GM12878 (cell line): ENCODE measurements at regions of chr7 and their contacts with region 1.

Region 1: DNA sequence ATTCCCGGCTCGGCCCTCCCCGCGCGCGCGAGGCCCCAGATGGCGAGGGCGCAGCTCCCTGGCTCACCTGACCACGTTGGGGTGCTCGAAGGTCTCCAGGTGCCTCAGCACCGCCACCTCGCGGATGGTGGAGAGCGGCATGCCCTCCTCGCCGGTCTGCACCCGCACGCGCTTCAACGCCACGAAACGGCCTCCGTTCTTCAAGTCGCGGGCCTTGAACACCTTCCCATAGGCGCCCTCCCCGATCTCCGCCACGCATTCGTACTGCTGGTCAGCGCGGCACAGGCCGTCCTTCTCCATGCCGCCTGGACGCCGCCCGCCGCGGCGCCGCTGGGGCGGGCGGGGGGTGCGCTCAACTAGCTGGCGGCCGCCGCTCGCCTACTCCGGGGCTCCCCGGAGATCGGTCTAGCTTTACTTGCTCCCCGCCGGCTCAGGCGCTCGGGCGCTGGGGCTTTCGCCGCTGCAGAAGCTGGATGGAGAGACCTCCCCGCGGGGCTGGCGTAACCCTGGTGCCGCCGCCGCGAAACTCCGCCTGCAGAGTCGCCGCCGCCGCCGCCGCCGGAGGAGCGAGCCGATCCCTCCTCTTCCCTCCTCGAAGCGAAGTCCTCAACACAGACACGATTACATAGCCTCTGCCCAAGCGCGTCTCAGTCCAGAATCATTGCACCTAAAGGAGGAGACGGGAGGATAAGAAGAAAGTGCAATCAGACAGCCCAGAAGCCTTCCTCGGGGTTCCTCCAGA is 3.2 kb downstream of the CDK6 start:
- DNase-seq: no peak
- ATAC-seq: peak; percentile 72
- H3K4me3 ChIP-seq: peak overlapping the region; percentile 85
- H3K27ac ChIP-seq: peak overlapping the region; percentile 91
- H3K4me1 ChIP-seq: peaks cover 5% of the 10 kb centered on the region
- H3K27me3 ChIP-seq: no peaks in the 10 kb centered on the region
- CTCF ChIP-seq: peak; percentile 87 to 98 (median 94)
- EP300 ChIP-seq: peak in 1 of 2 experiments; percentile 21; a peak in 1 of 4 replicates
- POLR2A ChIP-seq: peak; percentile 77
- RAD21 ChIP-seq: peak; percentile 88

Region 2: GRCh38 chr7:92641921-92642511 is 191.2 kb before region 1 on chr7:
- CTCF ChIA-PET with region 1: interaction called, 5 read pairs
- POLR2A ChIA-PET with region 1: interaction called, 4 read pairs
- RAD21 ChIA-PET with region 1: interaction called, 5 read pairs
- SMC1A ChIA-PET with region 1: interaction called, 18 read pairs
- in situ Hi-C with region 1: no loop called
- intact Hi-C with region 1: no loop called
- DNase-seq: no peak
- ATAC-seq: peak; percentile 83
- H3K4me3 ChIP-seq: peak overlapping the region; percentile 39
- H3K27ac ChIP-seq: peak overlapping the region; percentile 73
- H3K4me1 ChIP-seq: peaks cover 25% of the 10 kb centered on the region
- H3K27me3 ChIP-seq: no peaks in the 10 kb centered on the region
- CTCF ChIP-seq: no peak
- EP300 ChIP-seq: peak; percentile 60 to 73; a peak in 3 of 4 replicates
- POLR2A ChIP-seq: no peak
- RAD21 ChIP-seq: 0 out of 2 replicates have a peak, but pooled peaks have one; percentile 4

Region 3: GRCh38 chr7:92708111-92709042 is 124.8 kb before region 1 on chr7:
- CTCF ChIA-PET with region 1: interaction called, 4 read pairs
- POLR2A ChIA-PET with region 1: interaction called, 6 read pairs
- RAD21 ChIA-PET with region 1: interaction called, 4 read pairs
- SMC1A ChIA-PET with region 1: interaction called, 3 read pairs
- in situ Hi-C with region 1: no loop called
- intact Hi-C with region 1: loop called (anchors 5 kb)
- DNase-seq: no peak
- ATAC-seq: peak; percentile 87
- H3K4me3 ChIP-seq: no peak overlapping the region
- H3K27ac ChIP-seq: no peak overlapping the region
- H3K4me1 ChIP-seq: peaks cover 5% of the 10 kb centered on the region; the same call in 1 of the 2 replicates
- H3K27me3 ChIP-seq: no peaks in the 10 kb centered on the region
- CTCF ChIP-seq: no peak
- EP300 ChIP-seq: no peak
- POLR2A ChIP-seq: no peak
- RAD21 ChIP-seq: no peak

Region 4: GRCh38 chr7:92778972-92779371 is 54.2 kb before region 1 on chr7:
- CTCF ChIA-PET with region 1: interaction called, 4 read pairs
- POLR2A ChIA-PET with region 1: interaction called, 3 read pairs
- RAD21 ChIA-PET with region 1: interaction called, 4 read pairs
- SMC1A ChIA-PET with region 1: interaction called, 12 read pairs
- in situ Hi-C with region 1: no loop called
- intact Hi-C with region 1: loop called (anchors 5 kb)
- DNase-seq: peak; percentile 34
- ATAC-seq: peak; percentile 88
- H3K4me3 ChIP-seq: no peak overlapping the region
- H3K27ac ChIP-seq: peak overlapping the region; percentile 53; the same call in 1 of the 2 replicates
- H3K4me1 ChIP-seq: peaks cover 15% of the 10 kb centered on the region
- H3K27me3 ChIP-seq: no peaks in the 10 kb centered on the region
- CTCF ChIP-seq: no peak
- EP300 ChIP-seq: no peak
- POLR2A ChIP-seq: no peak
- RAD21 ChIP-seq: peak; percentile 37; the same call in 1 of the 2 replicates

Region 5: GRCh38 chr7:92815412-92815811 is 17.8 kb before region 1 on chr7:
- CTCF ChIA-PET with region 1: interaction called, 21 read pairs
- POLR2A ChIA-PET with region 1: interaction called, 11 read pairs
- RAD21 ChIA-PET with region 1: interaction called, 124 read pairs
- SMC1A ChIA-PET with region 1: interaction called, 83 read pairs
- in situ Hi-C with region 1: no loop called
- intact Hi-C with region 1: loop called (anchors 1 kb)
- DNase-seq: no peak
- ATAC-seq: peak; percentile 15
- H3K4me3 ChIP-seq: no peak overlapping the region
- H3K27ac ChIP-seq: peak overlapping the region; percentile 1; the same call in 1 of the 2 replicates
- H3K4me1 ChIP-seq: peaks cover 32% of the 10 kb centered on the region
- H3K27me3 ChIP-seq: no peaks in the 10 kb centered on the region
- CTCF ChIP-seq: no peak
- EP300 ChIP-seq: no peak
- POLR2A ChIP-seq: no peak
- RAD21 ChIP-seq: no peak

Region 6: DNA sequence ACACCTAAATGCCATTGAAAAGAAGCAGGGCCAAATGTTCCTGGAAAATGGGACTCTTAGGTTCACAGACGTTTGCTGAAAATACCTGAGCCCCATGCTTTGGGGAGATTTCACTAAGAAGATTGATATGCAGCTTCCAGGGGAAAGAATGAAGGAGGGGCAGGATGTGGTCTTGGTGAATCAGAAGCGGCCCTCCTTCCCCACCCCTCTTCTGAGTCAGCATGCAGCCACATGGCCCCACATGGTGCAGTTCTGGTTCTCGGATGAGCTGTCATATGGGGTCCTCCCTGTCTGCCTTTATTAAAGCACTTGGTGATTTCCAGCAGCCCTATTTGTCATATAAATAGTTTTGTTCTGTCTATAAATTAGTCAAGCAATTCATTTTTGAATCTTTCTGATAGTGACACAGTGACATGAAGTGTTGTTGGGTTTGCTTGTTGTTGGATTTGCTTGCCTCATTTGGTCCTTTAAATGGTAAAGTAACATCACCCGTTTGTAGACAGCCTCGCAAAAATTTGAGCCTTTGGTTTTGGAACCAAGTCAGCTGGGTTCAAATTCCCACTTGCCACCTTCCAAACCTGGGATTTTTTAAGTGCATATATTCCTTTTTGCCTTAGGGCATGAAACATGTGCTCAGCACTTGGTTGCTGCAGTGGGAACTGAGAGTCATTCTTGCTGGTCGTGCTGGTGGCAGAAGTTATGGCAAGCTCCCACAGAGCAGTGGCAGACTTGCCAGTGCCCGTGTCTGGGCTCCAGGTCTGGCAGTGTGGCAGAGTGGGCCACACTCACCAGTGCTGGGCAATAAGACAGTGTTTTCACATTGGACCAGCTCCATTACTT is 71.3 kb after region 1 on chr7:
- CTCF ChIA-PET with region 1: no interaction called
- POLR2A ChIA-PET with region 1: interaction called, 9 read pairs
- RAD21 ChIA-PET with region 1: interaction called, 6 read pairs
- SMC1A ChIA-PET with region 1: interaction called, 6 read pairs
- in situ Hi-C with region 1: no loop called
- intact Hi-C with region 1: loop called (anchors 2 kb)
- DNase-seq: peak; percentile 84
- ATAC-seq: peak; percentile 99
- H3K4me3 ChIP-seq: peak overlapping the region; percentile 4; the same call in 1 of the 2 replicates
- H3K27ac ChIP-seq: peak overlapping the region; percentile 80
- H3K4me1 ChIP-seq: peaks cover 8% of the 10 kb centered on the region
- H3K27me3 ChIP-seq: no peaks in the 10 kb centered on the region
- CTCF ChIP-seq: no peak
- EP300 ChIP-seq: peak; percentile 80 to 92
- POLR2A ChIP-seq: no peak
- RAD21 ChIP-seq: no peak